ENCODE measurements at regions of chr2 and their contacts with region 1.

Region 1: GRCh38 chr2:6877402-6878304 is at the start of gene RSAD2:
- DNase-seq: peak; percentile 68
- ATAC-seq: peak; percentile 81
- H3K4me3 Mint-ChIP-seq: peak within 1 kb of the TSS; percentile 99
- H3K27ac Mint-ChIP-seq: peak within 1 kb of the TSS; percentile 95
- H3K4me1 Mint-ChIP-seq: peaks cover 56% of the 10 kb centered on the region
- H3K27me3 Mint-ChIP-seq: no peaks in the 10 kb centered on the region
- total RNA-seq, gene RSAD2: 104 to 105 TPM

Region 2: DNA sequence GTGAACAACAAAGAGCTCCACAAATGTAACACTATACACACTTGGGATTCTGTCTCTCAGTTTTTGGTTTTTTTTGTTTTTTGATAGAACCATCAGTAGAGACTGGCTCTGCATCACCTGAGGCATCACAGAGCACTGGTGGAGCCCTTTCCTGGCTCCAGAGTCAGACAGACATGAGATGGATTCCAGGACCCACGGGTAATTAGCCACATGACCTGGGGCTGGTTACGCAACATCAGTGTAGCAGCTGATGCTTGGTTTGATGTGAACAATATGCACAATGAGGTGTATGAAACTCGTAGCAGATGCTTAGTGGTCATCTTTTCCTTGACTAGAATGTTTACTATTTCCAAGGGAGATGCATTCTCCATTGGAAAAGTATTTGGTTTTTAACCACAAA is 52.7 kb before region 1 on chr2:
- POLR2A ChIA-PET with region 1: no interaction called
- DNase-seq: no peak
- ATAC-seq: no peak
- H3K4me3 Mint-ChIP-seq: no peak overlapping the region
- H3K27ac Mint-ChIP-seq: no peak overlapping the region
- H3K4me1 Mint-ChIP-seq: peaks cover 16% of the 10 kb centered on the region
- H3K27me3 Mint-ChIP-seq: peaks cover under 1% of the 10 kb centered on the region

Region 3: GRCh38 chr2:6860296-6860695 is 17.4 kb before region 1 on chr2:
- POLR2A ChIA-PET with region 1: interaction called, 557 read pairs
- DNase-seq: no peak
- ATAC-seq: no peak
- H3K4me3 Mint-ChIP-seq: peak overlapping the region; percentile 48
- H3K27ac Mint-ChIP-seq: peak overlapping the region; percentile 80
- H3K4me1 Mint-ChIP-seq: peaks cover 70% of the 10 kb centered on the region
- H3K27me3 Mint-ChIP-seq: no peaks in the 10 kb centered on the region

Region 4: GRCh38 chr2:6887751-6888192 is 10.1 kb after region 1 on chr2:
- POLR2A ChIA-PET with region 1: interaction called, 12 read pairs
- DNase-seq: no peak
- ATAC-seq: no peak
- H3K4me3 Mint-ChIP-seq: no peak overlapping the region
- H3K27ac Mint-ChIP-seq: peak overlapping the region; percentile 36
- H3K4me1 Mint-ChIP-seq: peaks cover 35% of the 10 kb centered on the region
- H3K27me3 Mint-ChIP-seq: no peaks in the 10 kb centered on the region

Region 5: GRCh38 chr2:6896930-6897759 is 19.5 kb after region 1 on chr2:
- POLR2A ChIA-PET with region 1: interaction called, 10 read pairs
- DNase-seq: no peak
- ATAC-seq: no peak
- H3K4me3 Mint-ChIP-seq: no peak overlapping the region
- H3K27ac Mint-ChIP-seq: peak overlapping the region; percentile 35
- H3K4me1 Mint-ChIP-seq: peaks cover 20% of the 10 kb centered on the region
- H3K27me3 Mint-ChIP-seq: no peaks in the 10 kb centered on the region

Region 6: GRCh38 chr2:6909431-6910385 is 32.1 kb after region 1 on chr2:
- POLR2A ChIA-PET with region 1: interaction called, 180 read pairs
- DNase-seq: no peak
- ATAC-seq: peak; percentile 73
- H3K4me3 Mint-ChIP-seq: peak overlapping the region; percentile 84
- H3K27ac Mint-ChIP-seq: peak overlapping the region; percentile 98
- H3K4me1 Mint-ChIP-seq: peaks cover 66% of the 10 kb centered on the region
- H3K27me3 Mint-ChIP-seq: no peaks in the 10 kb centered on the region

Region 7: DNA sequence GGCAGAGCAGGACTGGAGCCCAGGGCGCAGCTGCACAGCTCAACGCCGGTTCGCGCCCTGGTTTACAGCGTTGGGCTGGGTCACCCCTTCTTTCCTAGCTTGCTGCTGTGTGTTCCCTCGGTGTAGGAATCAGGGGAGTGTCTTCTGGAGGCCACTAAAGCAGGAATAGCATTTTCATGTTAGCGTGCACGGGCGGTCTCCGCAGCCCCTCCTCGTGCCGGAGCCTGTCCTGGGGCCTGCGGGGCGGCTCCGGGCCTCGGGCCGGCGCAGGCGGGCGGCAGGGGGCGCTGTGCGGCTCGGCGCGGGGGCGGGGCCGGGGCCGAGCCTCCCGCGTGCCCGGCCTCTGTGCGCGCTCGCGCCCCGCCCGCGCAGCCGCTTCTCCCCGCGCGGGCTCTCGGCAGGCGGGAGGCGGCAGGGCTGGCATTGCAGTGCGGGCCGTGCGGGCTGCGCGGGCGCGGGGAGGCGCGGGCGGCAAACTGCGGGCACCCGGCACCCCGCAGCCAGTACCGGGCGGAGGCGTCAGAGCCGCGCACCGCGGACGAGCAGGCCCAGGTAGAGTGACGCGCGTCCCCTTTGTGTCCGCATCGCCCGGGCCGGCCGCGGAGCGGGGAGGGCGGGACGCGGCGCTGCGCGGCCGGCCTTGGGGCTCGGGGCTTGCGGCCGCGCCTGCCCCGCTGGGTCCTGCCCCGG is 39.6 kb after region 1 on chr2 and contains the start of gene RNF144A:
- POLR2A ChIA-PET with region 1: interaction called, 180 read pairs
- DNase-seq: peak; percentile 95
- ATAC-seq: peak; percentile 74
- H3K4me3 Mint-ChIP-seq: peak within 1 kb of the TSS; percentile 88
- H3K27ac Mint-ChIP-seq: peak within 1 kb of the TSS; percentile 91
- H3K4me1 Mint-ChIP-seq: peaks cover 67% of the 10 kb centered on the region
- H3K27me3 Mint-ChIP-seq: no peaks in the 10 kb centered on the region
- total RNA-seq, gene RNF144A: 78.7 to 91.1 TPM

Region 8: DNA sequence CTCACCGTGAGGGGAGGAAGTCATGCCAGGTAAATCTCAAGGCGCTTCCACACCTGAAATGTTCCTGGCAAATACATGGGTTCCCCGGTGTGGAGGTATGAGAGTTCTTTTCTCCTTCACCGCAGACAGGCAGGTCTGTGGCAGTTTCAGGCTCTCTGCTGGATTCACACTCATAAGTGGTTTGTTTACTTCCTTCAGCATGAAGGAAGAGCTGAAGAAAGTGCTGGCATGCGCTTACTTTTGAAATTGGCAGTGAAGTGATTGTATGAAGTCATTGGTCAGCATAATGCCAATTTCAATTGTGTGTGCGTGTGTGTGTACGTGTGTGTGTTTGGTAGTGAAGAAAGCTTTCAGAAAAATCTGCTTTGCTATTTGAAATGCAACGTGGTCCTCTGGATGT is 83.0 kb after region 1 on chr2:
- POLR2A ChIA-PET with region 1: no interaction called
- DNase-seq: no peak
- ATAC-seq: no peak
- H3K4me3 Mint-ChIP-seq: no peak overlapping the region
- H3K27ac Mint-ChIP-seq: no peak overlapping the region
- H3K4me1 Mint-ChIP-seq: peaks cover 42% of the 10 kb centered on the region
- H3K27me3 Mint-ChIP-seq: no peaks in the 10 kb centered on the region

Measured in activated naive CD8-positive, alpha-beta T cell treated with anti-CD3 and anti-CD28 coated beads, Interleukin-2, amount 10 ng/mL, durations not matched to agents 7 days and 5 days (primary cell).